Mammary epithelial cell (primary cell): ENCODE measurements at regions of chr6 and their contacts with region 1.

Region 1: GRCh38 chr6:7615611-7616383 is 25.8 kb downstream of the SNRNP48 start:
- DNase-seq: peak; percentile 62
- H3K4me3 ChIP-seq: no peak overlapping the region
- H3K27ac ChIP-seq: no peak overlapping the region
- H3K4me1 ChIP-seq: peaks cover 22% of the 10 kb centered on the region
- H3K27me3 ChIP-seq: no peaks in the 10 kb centered on the region
- CTCF ChIP-seq: peak; percentile 71 to 81

Region 2: DNA sequence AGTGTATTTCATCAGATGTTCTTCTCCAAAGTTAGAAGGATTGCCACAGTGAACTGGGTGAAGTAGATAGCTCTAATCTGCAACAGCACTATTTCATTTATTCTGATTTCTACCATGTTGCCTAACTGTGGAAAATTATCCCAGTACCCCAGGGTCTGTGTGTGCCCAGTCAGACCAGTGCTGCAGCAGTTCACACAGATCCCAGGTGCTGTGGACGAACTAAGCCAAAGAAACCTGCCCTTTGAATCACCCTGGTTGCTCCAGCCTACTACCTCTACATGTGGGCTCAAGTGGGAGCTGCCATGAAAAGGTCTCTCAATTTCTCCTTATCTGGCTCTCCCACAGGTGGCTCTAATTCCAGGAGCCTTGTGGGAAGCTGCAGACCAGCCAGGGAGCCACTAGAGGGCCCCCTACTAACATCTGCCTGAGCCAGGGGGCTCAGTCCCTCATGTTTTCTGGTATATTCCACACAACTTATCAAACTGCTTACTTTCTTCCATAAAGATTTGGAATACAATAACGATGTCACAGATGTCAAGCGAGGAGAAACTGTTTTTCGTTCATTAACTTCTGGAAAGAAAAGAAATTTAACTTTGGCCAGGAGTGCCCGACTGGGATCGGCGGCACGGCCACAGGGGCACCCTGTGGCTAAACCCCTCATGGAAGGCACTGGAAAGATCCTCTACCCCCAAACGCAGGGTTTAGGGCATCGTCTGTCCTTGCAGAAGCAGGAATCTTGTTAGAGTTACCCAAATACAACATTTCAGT is 1058.9 kb before region 1 on chr6:
- CTCF ChIA-PET with region 1: no interaction called
- dilution Hi-C with region 1: no loop called
- in situ Hi-C with region 1: no loop called
- intact Hi-C with region 1: loop called (anchors 10 kb)
- DNase-seq: no peak
- H3K4me3 ChIP-seq: no peak overlapping the region
- H3K27ac ChIP-seq: no peak overlapping the region
- H3K4me1 ChIP-seq: peaks cover 11% of the 10 kb centered on the region
- H3K27me3 ChIP-seq: no peaks in the 10 kb centered on the region
- CTCF ChIP-seq: peak; percentile 71 to 78

Region 3: GRCh38 chr6:7238900-7239589 is 376.8 kb before region 1 on chr6:
- CTCF ChIA-PET with region 1: no interaction called
- dilution Hi-C with region 1: no loop called
- in situ Hi-C with region 1: no loop called
- intact Hi-C with region 1: loop called (anchors 1 kb)
- DNase-seq: peak; percentile 58
- H3K4me3 ChIP-seq: no peak overlapping the region
- H3K27ac ChIP-seq: no peak overlapping the region
- H3K4me1 ChIP-seq: peaks cover 15% of the 10 kb centered on the region
- H3K27me3 ChIP-seq: no peaks in the 10 kb centered on the region
- CTCF ChIP-seq: peak; percentile 42 to 72

Region 4: GRCh38 chr6:7389451-7390225 is 226.2 kb before region 1 on chr6 and contains the starts of genes CAGE1 and RIOK1:
- CTCF ChIA-PET with region 1: no interaction called
- dilution Hi-C with region 1: no loop called
- in situ Hi-C with region 1: no loop called
- intact Hi-C with region 1: loop called (anchors 1 kb)
- DNase-seq: peak; percentile 97
- H3K4me3 ChIP-seq: peak within 1 kb of the TSS; percentile 43 to 67 (median 61)
- H3K27ac ChIP-seq: peak within 1 kb of the TSS; percentile 95
- H3K4me1 ChIP-seq: peaks cover 23% of the 10 kb centered on the region
- H3K27me3 ChIP-seq: no peaks in the 10 kb centered on the region
- CTCF ChIP-seq: no peak
- total RNA-seq, gene CAGE1: under 0.01 to 0.14 TPM
- total RNA-seq, gene RIOK1: 13.0 to 20.3 TPM

Region 5: DNA sequence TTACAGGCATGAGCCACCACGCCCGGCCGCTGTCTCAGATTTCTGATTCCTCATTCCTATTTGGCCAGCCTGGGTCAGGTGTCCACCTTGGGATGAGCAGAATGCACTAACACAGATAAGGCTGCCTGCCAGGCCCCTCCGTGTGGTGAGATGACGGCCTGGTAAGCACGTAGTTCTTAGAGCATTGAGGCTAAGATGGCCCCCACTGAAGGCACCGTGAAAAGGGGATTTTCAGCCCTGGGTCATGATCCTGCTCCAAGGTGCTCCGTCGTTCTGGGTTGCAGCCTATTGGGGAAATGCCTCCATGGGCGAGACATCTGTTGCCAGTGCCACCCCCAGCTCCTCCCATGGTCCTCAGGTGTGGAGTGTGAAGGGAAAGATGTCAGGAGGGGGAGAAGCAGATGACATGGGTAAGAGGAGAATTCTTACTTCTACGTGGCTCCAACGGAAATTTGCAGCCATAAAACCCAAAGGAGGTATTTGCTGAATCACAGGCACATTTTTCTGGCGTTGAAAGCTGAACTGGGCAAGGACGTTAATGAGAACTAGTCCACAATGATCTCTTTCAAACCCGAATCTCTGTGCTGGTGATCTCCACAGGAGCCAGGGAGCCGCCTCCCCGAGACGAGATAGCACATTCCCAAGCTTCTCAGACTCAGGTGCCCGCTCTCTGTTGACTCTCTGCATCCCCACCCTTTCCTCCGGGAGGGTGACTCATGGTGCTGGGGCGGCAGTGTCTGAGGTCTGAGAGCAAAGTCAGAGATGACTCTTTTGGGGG is 76.1 kb after region 1 on chr6:
- CTCF ChIA-PET with region 1: no interaction called
- dilution Hi-C with region 1: loop called (anchors 5 kb)
- in situ Hi-C with region 1: no loop called
- intact Hi-C with region 1: no loop called
- DNase-seq: peak; percentile 99
- H3K4me3 ChIP-seq: no peak overlapping the region
- H3K27ac ChIP-seq: peak overlapping the region; percentile 83
- H3K4me1 ChIP-seq: peaks cover 28% of the 10 kb centered on the region
- H3K27me3 ChIP-seq: no peaks in the 10 kb centered on the region
- CTCF ChIP-seq: no peak

Region 6: GRCh38 chr6:8006208-8006607 is 390.4 kb after region 1 on chr6:
- CTCF ChIA-PET with region 1: no interaction called
- dilution Hi-C with region 1: no loop called
- in situ Hi-C with region 1: loop called in 1 of 2 experiments (anchors 25 kb)
- intact Hi-C with region 1: loop called (anchors 1 kb)
- DNase-seq: peak; percentile 13
- H3K4me3 ChIP-seq: no peak overlapping the region
- H3K27ac ChIP-seq: no peak overlapping the region
- H3K4me1 ChIP-seq: no peaks in the 10 kb centered on the region
- H3K27me3 ChIP-seq: no peaks in the 10 kb centered on the region
- CTCF ChIP-seq: peak; percentile 35 to 49